GM12878 (cell line): ENCODE measurements at regions of chr2 and their contacts with region 1.

Region 1: DNA sequence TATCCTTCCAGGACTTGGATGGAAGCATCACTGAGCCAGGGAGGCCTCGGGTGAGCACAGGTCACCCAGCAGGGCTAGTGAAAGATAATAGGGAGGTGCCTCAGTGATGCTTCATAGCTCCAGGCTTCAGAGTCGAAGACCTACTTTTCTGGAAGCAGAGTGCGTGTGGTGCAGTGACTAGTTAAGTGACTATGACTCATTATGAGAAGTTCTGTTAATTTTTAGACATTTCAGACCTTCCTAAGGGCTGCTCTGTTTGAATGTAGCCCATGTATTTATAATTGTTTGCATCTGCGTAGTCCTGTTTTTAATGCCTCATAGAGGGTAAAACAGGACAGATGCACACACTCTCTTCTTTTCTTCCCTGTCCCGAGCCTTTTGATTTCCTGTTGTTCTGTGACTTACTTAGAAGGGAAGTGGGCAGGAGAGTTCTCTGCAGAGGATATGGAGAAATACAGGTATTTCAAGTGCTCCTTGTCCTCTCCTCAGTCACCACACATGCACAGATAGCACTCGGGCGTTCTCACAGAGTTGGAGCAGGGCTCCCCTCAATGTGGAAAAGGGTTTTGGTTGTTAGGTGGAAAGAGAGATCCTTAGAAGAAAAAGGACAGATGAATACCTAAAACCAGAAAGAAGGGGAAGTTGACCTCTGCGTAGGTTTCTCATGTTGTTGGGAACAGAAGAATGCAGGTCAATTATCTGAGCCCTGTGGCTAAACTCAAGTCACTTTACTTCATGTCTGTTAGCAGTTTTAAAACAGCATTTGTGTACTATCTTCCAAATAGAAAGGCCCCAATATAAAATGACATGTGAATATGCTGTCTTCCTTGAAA is 34.7 kb downstream of the RALB start:
- DNase-seq: peak; percentile 80
- ATAC-seq: peak; percentile 98
- H3K4me3 ChIP-seq: peak overlapping the region; percentile 42
- H3K27ac ChIP-seq: peak overlapping the region; percentile 98
- H3K4me1 ChIP-seq: peaks cover 17% of the 10 kb centered on the region
- H3K27me3 ChIP-seq: no peaks in the 10 kb centered on the region
- CTCF ChIP-seq: no peak
- EP300 ChIP-seq: peak; percentile 78 to 92
- POLR2A ChIP-seq: peak; percentile 58
- RAD21 ChIP-seq: no peak; the same call in 1 of the 2 replicates

Region 2: DNA sequence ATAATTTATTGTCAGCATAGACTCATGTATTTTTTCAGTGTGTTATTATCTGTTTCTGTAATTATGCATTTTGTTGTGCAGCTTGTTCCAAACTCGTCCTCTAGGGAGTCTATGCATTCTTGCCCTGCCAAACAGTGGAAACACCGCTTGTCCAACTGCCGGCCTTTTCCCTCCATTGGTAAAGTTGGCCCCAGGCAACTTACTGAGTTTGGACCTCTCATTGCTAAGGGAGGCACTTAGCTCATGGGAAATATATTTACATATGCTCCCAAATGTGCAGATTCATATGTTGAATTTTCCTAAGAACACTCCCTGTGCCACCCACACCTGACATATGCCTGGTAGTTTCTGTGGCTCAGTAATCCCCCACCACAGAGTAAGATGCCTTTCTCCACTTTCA is 162.2 kb before region 1 on chr2:
- CTCF ChIA-PET with region 1: no interaction called
- POLR2A ChIA-PET with region 1: no interaction called
- RAD21 ChIA-PET with region 1: no interaction called
- SMC1A ChIA-PET with region 1: no interaction called
- in situ Hi-C with region 1: no loop called
- intact Hi-C with region 1: no loop called
- DNase-seq: no peak
- ATAC-seq: no peak
- H3K4me3 ChIP-seq: no peak overlapping the region
- H3K27ac ChIP-seq: no peak overlapping the region
- H3K4me1 ChIP-seq: no peaks in the 10 kb centered on the region
- H3K27me3 ChIP-seq: no peaks in the 10 kb centered on the region
- CTCF ChIP-seq: no peak
- EP300 ChIP-seq: no peak
- POLR2A ChIP-seq: no peak
- RAD21 ChIP-seq: no peak

Region 3: DNA sequence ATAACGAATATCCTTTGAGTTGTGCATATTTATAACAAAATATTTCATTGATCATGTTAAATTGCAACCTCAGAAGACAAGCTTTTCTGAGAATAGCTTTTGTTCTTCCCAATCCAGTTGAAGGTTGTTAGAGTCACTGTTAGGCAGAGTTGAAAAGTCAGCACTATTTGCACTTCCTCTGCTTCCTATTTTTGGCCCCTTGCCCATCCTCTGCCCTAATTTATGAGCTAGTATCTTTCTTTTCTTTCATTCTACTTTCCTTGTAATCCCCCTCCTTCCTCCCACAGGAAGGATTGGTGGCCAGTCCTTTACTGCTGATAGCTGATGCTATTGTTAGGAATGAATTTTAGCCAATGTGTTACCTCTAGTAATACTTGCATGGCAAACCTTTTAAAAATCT is 29.9 kb before region 1 on chr2:
- CTCF ChIA-PET with region 1: interaction called, 10 read pairs
- POLR2A ChIA-PET with region 1: interaction called, 4 read pairs
- RAD21 ChIA-PET with region 1: interaction called, 23 read pairs
- SMC1A ChIA-PET with region 1: interaction called, 15 read pairs
- in situ Hi-C with region 1: no loop called
- intact Hi-C with region 1: loop called (anchors 2 kb)
- DNase-seq: no peak
- ATAC-seq: no peak
- H3K4me3 ChIP-seq: 0 out of 2 replicates have a peak overlapping the region, but pooled peaks have one; percentile 6
- H3K27ac ChIP-seq: no peak overlapping the region
- H3K4me1 ChIP-seq: peaks cover 16% of the 10 kb centered on the region
- H3K27me3 ChIP-seq: no peaks in the 10 kb centered on the region
- CTCF ChIP-seq: no peak
- EP300 ChIP-seq: no peak
- POLR2A ChIP-seq: no peak
- RAD21 ChIP-seq: no peak